Mucosa of descending colon (tissue), 3 donors: ENCODE measurements at regions of chr15 and their contacts with region 1.

Region 1: DNA sequence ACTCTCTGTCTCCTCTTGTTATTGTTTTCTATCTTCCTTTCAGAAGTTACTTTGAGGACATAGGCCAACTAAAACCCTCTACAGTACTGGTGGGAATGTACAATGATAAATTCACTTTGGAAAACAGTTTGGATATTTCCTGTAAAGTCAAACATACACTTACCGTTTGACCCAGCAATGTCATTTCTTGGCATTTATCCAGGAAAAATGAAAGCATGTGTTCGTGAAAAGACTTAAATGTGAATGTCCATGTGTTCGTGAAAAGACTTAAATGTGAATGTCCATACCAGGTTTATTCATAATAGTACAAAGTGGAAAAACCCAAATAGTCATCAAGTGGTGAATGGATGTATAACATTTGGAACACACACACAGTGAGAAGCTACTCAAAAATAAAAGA is 361.5 kb upstream of the DPH6 start:
- DNase-seq: no peak
- ATAC-seq: no peak
- H3K4me3 ChIP-seq: no peak overlapping the region
- H3K4me1 ChIP-seq: no peaks in the 10 kb centered on the region
- CTCF ChIP-seq: no peak

Region 2: GRCh38 chr15:36251450-36251849 is 343.9 kb after region 1 on chr15:
- intact Hi-C with region 1: loop called in 1 of 2 experiments (anchors 5 kb)
- DNase-seq: no peak
- ATAC-seq: no peak
- H3K4me3 ChIP-seq: no peak overlapping the region
- H3K4me1 ChIP-seq: no peaks in the 10 kb centered on the region
- CTCF ChIP-seq: no peak